ENCODE measurements at regions of chr9 and their contacts with region 1.

Region 1: DNA sequence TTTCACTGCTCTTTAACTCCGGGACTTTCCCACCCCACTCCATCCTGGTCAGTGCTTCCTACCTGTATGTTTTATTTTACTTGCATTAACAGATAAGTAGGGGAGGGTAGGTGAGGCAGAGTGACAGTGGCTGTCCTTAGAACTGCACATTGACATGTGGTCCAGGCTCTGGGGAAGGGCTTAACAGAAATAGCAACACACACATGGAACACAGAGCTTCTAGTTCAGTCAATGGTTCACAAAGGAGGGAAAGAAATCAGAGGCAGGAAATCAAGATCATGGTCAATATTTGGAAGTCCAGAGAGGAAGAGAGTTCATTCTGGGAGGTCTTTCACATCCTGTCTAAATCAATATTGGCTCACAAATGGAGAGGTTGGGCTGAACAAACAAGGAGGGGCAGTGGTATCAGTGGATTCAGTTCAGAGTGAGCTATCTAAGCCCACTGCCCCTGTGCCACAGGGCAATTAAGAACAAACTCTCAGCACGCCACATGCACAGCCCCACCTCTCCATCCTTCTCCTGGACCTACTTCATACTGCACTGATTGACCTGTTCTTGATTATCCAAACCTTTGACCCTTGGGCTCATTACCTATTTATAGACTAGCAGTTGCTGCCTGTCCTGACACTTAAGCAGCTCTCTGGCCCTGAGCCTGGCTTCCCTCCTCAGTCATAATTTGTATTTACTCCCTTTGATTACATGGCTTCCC is 6.2 kb upstream of the VPS13A start:
- DNase-seq: peak; percentile 99
- ATAC-seq: peak; percentile 98
- H3K4me3 ChIP-seq: peak overlapping the region in 1 of 3 experiments; percentile 19; a peak in 1 of 6 replicates
- H3K27ac ChIP-seq: peak overlapping the region; percentile 20
- H3K4me1 ChIP-seq: peaks cover 48% of the 10 kb centered on the region
- H3K27me3 ChIP-seq: peaks cover 1 to 17% of the 10 kb centered on the region in 2 experiments; a peak in 1 of 5 replicates
- CTCF ChIP-seq: no peak
- EP300 ChIP-seq: peak; percentile 75 to 94; a peak in 3 of 4 replicates
- POLR2A ChIP-seq: no peak
- RAD21 ChIP-seq: no peak

Region 2: DNA sequence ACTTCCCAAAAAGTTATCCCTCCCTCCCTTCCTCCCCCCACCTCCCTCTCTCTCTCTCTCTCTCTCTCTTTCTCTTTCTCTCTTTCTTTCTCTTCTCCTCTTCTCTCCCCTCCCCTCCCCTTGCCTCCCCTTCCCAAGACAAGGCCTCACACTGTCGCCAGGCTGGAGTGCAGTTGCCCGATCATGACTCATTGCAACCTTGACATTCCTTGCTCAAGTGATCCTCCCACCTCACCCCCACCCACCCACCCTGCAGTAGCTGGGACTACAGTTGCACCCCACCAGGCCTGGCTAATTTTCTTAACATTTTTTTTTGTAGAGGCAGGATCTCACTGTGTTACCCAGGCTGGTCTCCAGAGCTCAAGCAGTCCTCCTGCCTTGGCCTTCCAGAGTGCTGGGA is 39.0 kb after region 1 on chr9:
- CTCF ChIA-PET with region 1: no interaction called
- POLR2A ChIA-PET with region 1: no interaction called
- in situ Hi-C with region 1: loop called (anchors 5 kb)
- intact Hi-C with region 1: no loop called
- DNase-seq: peak; percentile 58
- ATAC-seq: peak; percentile 69; the same call in 2 of the 3 replicates
- H3K4me3 ChIP-seq: no peak overlapping the region
- H3K27ac ChIP-seq: no peak overlapping the region
- H3K4me1 ChIP-seq: peaks cover 13% of the 10 kb centered on the region
- H3K27me3 ChIP-seq: no peaks in the 10 kb centered on the region
- CTCF ChIP-seq: no peak
- EP300 ChIP-seq: no peak
- POLR2A ChIP-seq: no peak
- RAD21 ChIP-seq: no peak

Measured in HepG2 (cell line).